Activated naive CD4-positive, alpha-beta T cell treated with anti-CD3 and anti-CD28 coated beads for 36 hours (primary cell): ENCODE measurements at regions of chr9 and their contacts with region 1.

Region 1: GRCh38 chr9:35096035-35096849 is at the start of gene PIGO:
- DNase-seq: peak; percentile 92
- H3K4me3 Mint-ChIP-seq: peak within 1 kb of the TSS; percentile 83
- H3K27ac Mint-ChIP-seq: peak within 1 kb of the TSS; percentile 91
- H3K4me1 Mint-ChIP-seq: peaks cover 37% of the 10 kb centered on the region
- H3K27me3 Mint-ChIP-seq: no peaks in the 10 kb centered on the region
- total RNA-seq, gene PIGO: 22.8 to 23.7 TPM

Region 2: GRCh38 chr9:33942471-33943083 is 1153.7 kb before region 1 on chr9:
- CTCF ChIA-PET with region 1: no interaction called
- intact Hi-C with region 1: no loop called
- DNase-seq: no peak
- H3K4me3 Mint-ChIP-seq: no peak overlapping the region
- H3K27ac Mint-ChIP-seq: no peak overlapping the region
- H3K4me1 Mint-ChIP-seq: no peaks in the 10 kb centered on the region
- H3K27me3 Mint-ChIP-seq: no peaks in the 10 kb centered on the region

Region 3: DNA sequence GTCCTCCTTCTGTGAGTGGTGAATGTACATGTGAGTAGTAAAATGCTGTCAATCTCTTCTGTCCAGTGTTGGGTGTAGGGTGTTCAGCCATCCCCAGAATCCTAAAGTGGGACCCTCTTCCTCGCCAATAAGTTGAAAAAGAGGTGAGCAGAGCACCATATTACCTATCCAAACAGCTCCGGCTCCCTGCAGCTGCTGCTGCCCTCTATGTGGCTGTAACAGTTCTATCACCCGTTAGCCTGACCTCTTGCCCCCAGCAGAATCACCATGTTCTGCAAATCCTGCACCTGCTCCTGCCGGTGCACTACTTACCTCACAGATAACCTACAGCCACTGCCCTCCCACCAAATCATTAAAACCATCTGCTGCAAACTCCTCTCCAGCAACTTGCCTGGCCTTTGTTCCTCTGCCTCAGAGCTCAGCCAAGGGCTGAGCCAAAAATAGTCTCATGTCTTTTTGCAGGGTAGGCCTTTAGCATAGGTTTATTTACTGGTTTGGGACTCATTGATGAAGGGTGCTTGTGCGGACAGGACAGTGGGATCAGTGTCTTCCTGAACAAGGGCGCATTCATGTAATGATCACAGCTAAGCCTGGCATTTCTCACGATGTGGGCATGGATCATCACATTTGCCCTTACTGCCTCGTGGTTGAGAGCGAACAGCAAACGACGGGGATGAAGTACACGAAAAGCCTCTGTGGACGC is 336.7 kb before region 1 on chr9:
- CTCF ChIA-PET with region 1: interaction called, 5 read pairs
- intact Hi-C with region 1: loop called (anchors 1 kb)
- DNase-seq: no peak
- H3K4me3 Mint-ChIP-seq: no peak overlapping the region
- H3K27ac Mint-ChIP-seq: no peak overlapping the region
- H3K4me1 Mint-ChIP-seq: peaks cover 2% of the 10 kb centered on the region
- H3K27me3 Mint-ChIP-seq: peaks cover 32% of the 10 kb centered on the region

Region 4: GRCh38 chr9:35071814-35072460 is 24.3 kb before region 1 on chr9:
- CTCF ChIA-PET with region 1: interaction called, 37 read pairs
- intact Hi-C with region 1: loop called (anchors 1 kb)
- DNase-seq: peak; percentile 77
- H3K4me3 Mint-ChIP-seq: peak overlapping the region; percentile 92
- H3K27ac Mint-ChIP-seq: peak overlapping the region; percentile 96
- H3K4me1 Mint-ChIP-seq: peaks cover 57% of the 10 kb centered on the region
- H3K27me3 Mint-ChIP-seq: no peaks in the 10 kb centered on the region

Region 5: DNA sequence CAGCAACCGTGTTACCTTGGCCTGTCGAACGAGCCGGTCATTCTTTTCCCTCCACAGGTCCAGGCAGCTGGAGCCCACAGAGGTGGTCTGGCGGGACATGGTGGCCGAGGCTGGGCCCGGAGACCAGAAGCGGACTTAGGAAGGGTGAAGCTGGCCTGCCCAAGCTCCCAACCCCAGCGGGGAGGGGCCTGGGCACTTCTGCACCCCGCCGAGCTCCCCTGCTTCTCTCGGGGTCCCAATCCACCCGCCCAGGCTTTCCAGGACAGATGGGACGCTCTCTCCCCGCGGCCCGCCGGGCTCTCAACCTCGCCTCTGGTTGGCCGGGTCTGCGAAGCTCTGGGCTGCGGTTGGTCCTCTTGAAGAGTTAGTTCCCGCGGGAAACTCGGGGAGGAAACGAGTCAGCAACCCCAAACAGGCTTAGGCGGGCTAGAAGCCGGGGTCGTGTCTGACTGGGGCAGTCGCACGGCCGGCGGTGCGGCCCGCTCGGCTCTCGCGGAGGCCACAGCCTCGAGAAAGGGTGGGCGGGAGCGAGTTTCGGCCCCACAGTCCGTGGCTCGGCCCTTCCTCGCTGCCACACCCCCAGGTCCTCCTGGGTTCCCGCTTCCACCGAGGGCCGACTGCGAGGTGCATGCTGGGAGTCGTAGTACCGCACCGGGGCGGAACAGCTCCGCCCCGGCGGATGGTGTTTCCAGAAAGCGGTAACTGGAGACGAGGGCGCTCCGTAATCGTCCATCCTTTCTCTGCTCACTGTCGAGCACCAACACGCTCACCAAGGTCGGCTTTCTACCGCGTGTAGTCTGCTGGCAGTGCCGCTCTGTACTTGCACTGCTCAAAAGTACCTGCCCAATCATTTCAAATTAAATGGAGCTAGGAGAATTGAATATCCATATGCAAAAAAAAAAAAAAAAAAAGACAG is 16.6 kb before region 1 on chr9 and contains the start of gene FANCG:
- CTCF ChIA-PET with region 1: interaction called, 37 read pairs
- intact Hi-C with region 1: loop called (anchors 1 kb)
- DNase-seq: peak; percentile 92
- H3K4me3 Mint-ChIP-seq: peak within 1 kb of the TSS; percentile 94
- H3K27ac Mint-ChIP-seq: peak within 1 kb of the TSS; percentile 98
- H3K4me1 Mint-ChIP-seq: peaks cover 19% of the 10 kb centered on the region
- H3K27me3 Mint-ChIP-seq: no peaks in the 10 kb centered on the region
- total RNA-seq, gene FANCG: 109 to 118 TPM

Region 6: DNA sequence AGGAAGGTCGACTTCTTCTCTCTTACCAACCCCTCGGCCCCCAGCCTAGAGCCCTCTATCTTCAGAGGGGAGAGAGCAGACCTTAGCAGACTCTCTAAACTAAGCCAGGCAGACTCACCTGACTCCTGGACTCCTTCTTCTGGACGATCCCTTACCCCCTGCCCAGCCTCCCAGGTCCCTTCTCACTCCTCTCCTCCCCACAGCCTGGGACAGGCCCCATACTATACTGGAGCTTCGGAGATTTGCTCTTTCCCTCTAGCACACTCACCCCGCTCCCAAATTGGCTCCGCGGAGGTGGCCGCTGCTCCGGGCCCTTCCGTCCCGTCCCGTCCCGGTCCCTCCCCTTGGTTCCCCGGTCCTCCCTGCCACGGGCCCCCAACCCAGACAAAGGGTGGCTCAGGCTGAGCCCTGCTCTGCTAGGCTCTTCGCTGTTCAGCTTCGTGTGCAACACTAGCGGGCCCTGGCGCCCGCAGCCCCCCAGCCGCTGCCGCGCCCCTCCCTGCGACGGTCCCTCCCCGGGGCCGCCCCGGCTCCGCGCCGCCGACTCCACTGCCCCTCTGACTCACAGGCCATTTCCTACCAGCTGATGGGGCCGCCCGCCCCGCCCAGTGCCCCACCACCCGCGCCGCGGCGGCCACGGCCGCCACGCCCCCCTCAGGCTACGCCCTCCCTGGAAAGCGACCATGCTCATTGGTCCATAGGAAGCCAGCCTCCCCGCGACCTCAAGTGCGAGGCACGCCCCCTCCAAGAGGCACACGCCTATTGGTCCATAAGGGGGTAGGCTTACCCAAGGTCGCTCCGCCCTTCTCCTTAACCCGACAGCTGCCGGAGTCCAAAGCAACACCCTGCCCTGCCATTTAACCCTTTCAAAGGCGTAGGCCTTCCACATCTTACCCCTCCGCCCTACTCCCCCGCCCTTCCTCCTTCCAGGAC is 15.0 kb after region 1 on chr9:
- CTCF ChIA-PET with region 1: interaction called, 6 read pairs
- intact Hi-C with region 1: loop called (anchors 1 kb)
- DNase-seq: peak; percentile 97
- H3K4me3 Mint-ChIP-seq: peak overlapping the region; percentile 56
- H3K27ac Mint-ChIP-seq: peak overlapping the region; percentile 88
- H3K4me1 Mint-ChIP-seq: peaks cover 44% of the 10 kb centered on the region
- H3K27me3 Mint-ChIP-seq: no peaks in the 10 kb centered on the region

Region 7: GRCh38 chr9:35152936-35153335 is 56.7 kb after region 1 on chr9:
- CTCF ChIA-PET with region 1: no interaction called
- intact Hi-C with region 1: no loop called
- DNase-seq: no peak
- H3K4me3 Mint-ChIP-seq: no peak overlapping the region
- H3K27ac Mint-ChIP-seq: no peak overlapping the region
- H3K4me1 Mint-ChIP-seq: no peaks in the 10 kb centered on the region
- H3K27me3 Mint-ChIP-seq: no peaks in the 10 kb centered on the region

Region 8: GRCh38 chr9:35287986-35288632 is 191.9 kb after region 1 on chr9:
- CTCF ChIA-PET with region 1: no interaction called
- intact Hi-C with region 1: no loop called
- DNase-seq: no peak
- H3K4me3 Mint-ChIP-seq: no peak overlapping the region
- H3K27ac Mint-ChIP-seq: no peak overlapping the region
- H3K4me1 Mint-ChIP-seq: no peaks in the 10 kb centered on the region
- H3K27me3 Mint-ChIP-seq: peaks cover 4% of the 10 kb centered on the region